ENCODE measurements at regions of chr12 and their contacts with region 1.

Region 1: DNA sequence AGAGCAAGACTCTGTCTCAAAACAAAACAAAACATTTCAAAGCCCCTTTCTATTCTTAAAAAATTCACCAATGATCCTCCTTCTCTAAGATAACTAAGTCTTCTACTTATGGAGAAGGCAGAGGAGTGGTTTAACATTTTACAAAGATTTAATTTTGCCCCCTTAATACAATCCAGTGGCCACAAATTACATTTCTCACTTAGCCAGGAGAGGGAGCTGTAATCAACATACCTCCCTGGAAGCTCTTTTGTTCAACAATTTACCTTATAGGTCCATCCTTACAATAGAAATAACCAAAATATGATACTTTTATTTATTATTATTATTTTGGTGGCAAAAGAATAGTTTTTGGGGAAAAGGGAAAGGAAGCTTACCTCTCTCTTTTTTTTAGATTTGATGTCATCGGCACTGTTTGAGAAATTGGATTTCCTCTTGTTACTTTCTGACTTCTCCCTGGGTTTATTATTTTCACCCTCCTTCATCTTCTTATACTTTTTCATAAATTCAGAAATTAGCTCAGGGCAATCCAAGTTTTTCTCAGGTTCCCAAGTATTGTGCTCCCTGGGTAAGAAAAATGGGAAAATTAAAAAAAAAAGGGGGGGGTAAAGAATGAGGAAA is 28.1 kb downstream of the CBX5 start:
- H3K4me3 ChIP-seq: no peak overlapping the region
- H3K27ac ChIP-seq: no peak overlapping the region
- H3K4me1 ChIP-seq: no peaks in the 10 kb centered on the region
- CTCF ChIP-seq: no peak

Region 2: DNA sequence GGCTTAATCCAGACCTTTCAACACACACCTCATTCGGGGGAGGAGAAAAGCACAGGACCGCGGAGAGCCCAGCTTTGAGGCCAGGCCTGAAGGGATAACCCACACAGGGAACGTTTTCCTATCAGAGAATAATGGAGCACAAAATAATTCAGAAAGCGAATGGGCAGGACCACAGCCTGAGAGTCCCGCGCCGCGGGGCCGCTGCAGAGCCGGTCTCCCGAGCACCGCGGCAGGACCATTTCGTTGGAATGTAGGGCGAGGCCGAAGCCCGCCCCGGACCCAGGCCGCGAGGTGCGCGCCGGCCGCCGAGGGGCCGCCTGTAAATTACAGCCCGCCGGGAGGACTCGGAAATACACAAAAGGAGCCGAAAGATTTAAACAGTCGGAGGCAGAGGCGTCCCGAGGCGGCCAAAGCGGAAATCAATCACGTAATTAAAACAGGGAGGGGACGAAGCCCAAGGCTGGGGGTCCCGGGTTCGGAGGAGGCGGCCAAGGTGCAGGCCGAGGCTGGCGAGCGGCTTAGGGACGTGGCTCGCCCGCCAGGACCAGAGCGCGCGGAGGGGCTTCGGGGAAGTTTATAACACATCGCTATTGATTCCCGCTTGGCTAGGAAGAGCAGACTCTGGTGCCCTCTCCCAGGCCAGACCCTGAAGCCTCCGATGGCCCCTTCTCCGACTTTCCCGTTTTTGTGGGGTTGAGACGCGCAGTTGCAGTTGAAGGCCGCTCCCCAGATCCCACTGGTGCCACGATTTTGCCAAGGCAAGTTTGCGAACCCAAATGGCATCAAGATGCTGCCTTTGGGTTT is 204.4 kb before region 1 on chr12:
- CTCF ChIA-PET with region 1: no interaction called
- POLR2A ChIA-PET with region 1: no interaction called
- H3K4me3 ChIP-seq: no peak overlapping the region
- H3K27ac ChIP-seq: no peak overlapping the region
- H3K4me1 ChIP-seq: peaks cover 58% of the 10 kb centered on the region
- CTCF ChIP-seq: no peak

Region 3: DNA sequence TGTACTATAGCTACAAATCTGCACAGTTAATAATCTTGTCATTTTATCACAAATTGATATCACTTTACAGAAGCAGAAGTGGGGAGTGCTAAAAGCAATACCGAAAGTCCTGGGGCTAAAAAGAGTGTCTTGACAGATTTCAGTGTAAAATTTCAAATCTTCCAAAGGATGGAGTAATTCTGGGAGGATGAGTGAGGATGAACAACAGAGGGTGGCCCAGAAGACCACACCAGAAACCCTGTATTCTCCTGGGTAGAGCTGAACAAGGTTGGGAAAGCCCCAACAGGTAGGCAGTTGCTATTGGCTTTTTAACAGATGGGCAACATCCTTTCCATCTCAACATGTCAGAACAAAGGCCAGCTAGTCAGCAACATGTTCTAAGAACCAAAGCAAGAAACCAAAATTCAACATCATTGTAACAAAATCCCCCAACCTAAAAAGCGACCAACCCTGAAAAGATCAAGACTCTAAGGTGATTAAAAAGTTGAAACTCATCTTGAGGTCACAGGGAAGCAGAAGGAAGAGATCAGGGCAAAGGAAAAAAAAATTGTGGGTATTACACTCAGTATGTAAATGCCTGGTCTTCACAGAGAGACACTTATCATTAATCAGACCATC is 10.7 kb before region 1 on chr12:
- CTCF ChIA-PET with region 1: interaction called, 61 read pairs
- POLR2A ChIA-PET with region 1: interaction called, 3 read pairs
- H3K4me3 ChIP-seq: no peak overlapping the region
- H3K27ac ChIP-seq: no peak overlapping the region
- H3K4me1 ChIP-seq: no peaks in the 10 kb centered on the region
- CTCF ChIP-seq: no peak

Region 4: DNA sequence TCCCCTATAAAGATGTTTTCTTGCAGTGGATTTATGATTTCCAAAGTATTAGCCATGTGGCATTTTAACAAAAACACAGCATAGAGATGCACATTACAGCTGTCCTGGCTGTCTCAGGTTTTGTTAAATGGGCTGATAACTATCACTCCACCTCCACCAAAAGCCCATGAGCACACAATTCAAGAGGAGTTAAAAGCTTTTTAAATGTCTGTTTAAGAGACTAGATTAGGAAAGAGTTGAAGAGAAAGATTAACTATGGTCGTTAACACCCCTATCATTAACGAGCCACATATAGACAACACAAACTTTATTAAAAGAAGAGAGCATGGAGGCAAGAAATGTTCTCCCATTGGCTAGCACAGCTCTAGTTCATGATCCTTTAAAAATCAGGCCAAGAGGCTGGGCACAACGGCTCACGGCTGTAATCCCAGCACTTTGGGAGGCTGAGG is 13.6 kb after region 1 on chr12:
- CTCF ChIA-PET with region 1: interaction called, 16 read pairs
- POLR2A ChIA-PET with region 1: interaction called, 7 read pairs
- H3K4me3 ChIP-seq: no peak overlapping the region
- H3K27ac ChIP-seq: no peak overlapping the region
- H3K4me1 ChIP-seq: peaks cover 25% of the 10 kb centered on the region
- CTCF ChIP-seq: no peak